ENCODE measurements at regions of chr7 and their contacts with region 1.

Region 1: GRCh38 chr7:37201003-37201875 is 247.4 kb downstream of the ELMO1 start:
- DNase-seq: peak; percentile 79
- ATAC-seq: peak; percentile 62; the same call in 1 of the 2 replicates
- H3K4me3 ChIP-seq: no peak overlapping the region
- H3K27ac ChIP-seq: no peak overlapping the region
- H3K4me1 ChIP-seq: no peaks in the 10 kb centered on the region
- H3K27me3 ChIP-seq: 0 out of 2 replicates have a peak, but pooled peaks cover 7% of the 10 kb centered on the region
- CTCF ChIP-seq: peak; percentile 90

Region 2: DNA sequence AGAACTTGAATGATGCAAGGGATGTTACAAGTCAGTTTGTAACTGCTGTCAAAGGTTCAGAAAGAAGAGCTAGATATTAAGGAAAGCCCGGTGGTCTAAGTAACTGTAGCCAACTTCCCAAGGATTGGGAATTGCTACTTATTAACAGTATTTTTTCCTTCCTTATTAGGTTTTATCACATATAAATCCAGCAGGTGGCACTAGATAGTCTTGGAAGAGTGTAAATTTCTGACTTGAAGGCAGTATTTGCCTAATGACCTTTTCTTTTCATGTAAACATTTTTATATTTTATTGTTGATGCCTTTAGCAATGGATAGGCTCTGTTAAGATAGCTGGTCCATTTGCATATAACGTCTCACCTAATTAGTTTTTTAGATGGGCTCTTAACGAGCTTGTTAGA is 760.4 kb before region 1 on chr7:
- CTCF ChIA-PET with region 1: no interaction called
- POLR2A ChIA-PET with region 1: no interaction called
- intact Hi-C with region 1: loop called (anchors 1 kb)
- DNase-seq: peak; percentile 38
- ATAC-seq: peak; percentile 55
- H3K4me3 ChIP-seq: no peak overlapping the region
- H3K27ac ChIP-seq: no peak overlapping the region
- H3K4me1 ChIP-seq: no peaks in the 10 kb centered on the region
- H3K27me3 ChIP-seq: no peaks in the 10 kb centered on the region
- CTCF ChIP-seq: peak; percentile 61

Region 3: GRCh38 chr7:36967387-36967786 is 233.9 kb before region 1 on chr7:
- CTCF ChIA-PET with region 1: interaction called, 7 read pairs
- POLR2A ChIA-PET with region 1: no interaction called
- intact Hi-C with region 1: loop called (anchors 1 kb)
- DNase-seq: peak; percentile 70
- ATAC-seq: peak; percentile 99
- H3K4me3 ChIP-seq: no peak overlapping the region
- H3K27ac ChIP-seq: no peak overlapping the region
- H3K4me1 ChIP-seq: no peaks in the 10 kb centered on the region
- H3K27me3 ChIP-seq: 0 out of 2 replicates have a peak, but pooled peaks cover 13% of the 10 kb centered on the region
- CTCF ChIP-seq: peak; percentile 82

Region 4: GRCh38 chr7:36986429-36987362 is 214.5 kb before region 1 on chr7:
- CTCF ChIA-PET with region 1: no interaction called
- POLR2A ChIA-PET with region 1: no interaction called
- intact Hi-C with region 1: loop called (anchors 5 kb)
- DNase-seq: peak; percentile 61
- ATAC-seq: peak; percentile 67
- H3K4me3 ChIP-seq: no peak overlapping the region
- H3K27ac ChIP-seq: no peak overlapping the region
- H3K4me1 ChIP-seq: no peaks in the 10 kb centered on the region
- H3K27me3 ChIP-seq: peaks cover 37% of the 10 kb centered on the region
- CTCF ChIP-seq: peak; percentile 81

Region 5: DNA sequence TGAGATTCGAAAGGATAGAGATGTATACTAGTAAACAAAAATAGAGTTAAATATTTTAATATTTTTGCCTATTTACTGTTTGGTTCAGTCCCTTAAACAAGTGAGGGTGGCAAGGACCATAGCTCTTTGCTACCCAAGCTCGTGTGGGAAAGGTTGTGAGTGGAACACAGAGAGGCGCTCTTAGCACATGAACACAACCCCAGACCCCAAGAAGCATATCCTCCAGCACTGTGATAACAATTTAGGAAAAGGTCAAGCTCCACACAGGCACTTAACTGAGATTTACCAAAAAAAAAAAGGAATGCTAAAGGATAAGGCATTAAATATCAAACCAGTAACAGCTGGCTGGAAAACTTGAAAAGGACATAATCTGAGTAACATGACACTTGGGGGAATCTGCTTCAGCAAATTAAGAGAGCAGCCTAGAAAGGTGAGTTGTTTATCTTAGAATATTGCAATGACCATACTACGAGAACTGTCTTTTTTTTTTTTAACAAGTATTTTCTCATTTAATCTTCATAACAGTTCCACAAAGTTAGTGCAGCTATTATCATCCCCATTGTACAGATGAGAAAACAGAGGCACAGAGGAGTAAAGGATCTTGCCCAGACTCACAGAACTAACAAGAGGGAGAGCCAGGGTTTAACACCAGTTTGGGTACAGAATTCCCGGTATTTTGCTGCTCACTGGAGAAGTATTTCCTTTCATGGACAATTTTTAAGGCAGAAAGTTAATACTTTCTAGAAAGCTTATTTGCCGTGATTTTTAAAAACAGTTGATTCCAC is 173.5 kb before region 1 on chr7:
- CTCF ChIA-PET with region 1: interaction called, 3 read pairs
- POLR2A ChIA-PET with region 1: no interaction called
- intact Hi-C with region 1: loop called (anchors 5 kb)
- DNase-seq: peak; percentile 4
- ATAC-seq: no peak
- H3K4me3 ChIP-seq: no peak overlapping the region
- H3K27ac ChIP-seq: no peak overlapping the region
- H3K4me1 ChIP-seq: peaks cover 17% of the 10 kb centered on the region
- H3K27me3 ChIP-seq: 0 out of 2 replicates have a peak, but pooled peaks cover 13% of the 10 kb centered on the region
- CTCF ChIP-seq: 0 out of 2 replicates have a peak, but pooled peaks have one; percentile 29

Region 6: GRCh38 chr7:37352974-37353948 is 152.0 kb after region 1 on chr7:
- CTCF ChIA-PET with region 1: no interaction called
- POLR2A ChIA-PET with region 1: no interaction called
- intact Hi-C with region 1: no loop called
- DNase-seq: peak; percentile 8
- ATAC-seq: no peak
- H3K4me3 ChIP-seq: no peak overlapping the region
- H3K27ac ChIP-seq: no peak overlapping the region
- H3K4me1 ChIP-seq: no peaks in the 10 kb centered on the region
- H3K27me3 ChIP-seq: no peaks in the 10 kb centered on the region
- CTCF ChIP-seq: peak; percentile 49